HepG2 (cell line): ENCODE measurements at regions of chr9 and their contacts with region 1.

Region 1: GRCh38 chr9:130712564-130713285 is 19.1 kb downstream of the EXOSC2 start:
- DNase-seq: peak; percentile 95
- ATAC-seq: peak; percentile 98
- H3K4me3 ChIP-seq: peak overlapping the region; percentile 91 to 95 (median 92)
- H3K27ac ChIP-seq: peak overlapping the region; percentile 96
- H3K4me1 ChIP-seq: peaks cover 26% of the 10 kb centered on the region
- H3K27me3 ChIP-seq: no peaks in the 10 kb centered on the region; a peak in 1 of 5 replicates
- CTCF ChIP-seq: no peak
- EP300 ChIP-seq: no peak
- POLR2A ChIP-seq: peak in 1 of 2 experiments; percentile 89
- RAD21 ChIP-seq: 0 out of 2 replicates have a peak, but pooled peaks have one; percentile 7

Region 2: DNA sequence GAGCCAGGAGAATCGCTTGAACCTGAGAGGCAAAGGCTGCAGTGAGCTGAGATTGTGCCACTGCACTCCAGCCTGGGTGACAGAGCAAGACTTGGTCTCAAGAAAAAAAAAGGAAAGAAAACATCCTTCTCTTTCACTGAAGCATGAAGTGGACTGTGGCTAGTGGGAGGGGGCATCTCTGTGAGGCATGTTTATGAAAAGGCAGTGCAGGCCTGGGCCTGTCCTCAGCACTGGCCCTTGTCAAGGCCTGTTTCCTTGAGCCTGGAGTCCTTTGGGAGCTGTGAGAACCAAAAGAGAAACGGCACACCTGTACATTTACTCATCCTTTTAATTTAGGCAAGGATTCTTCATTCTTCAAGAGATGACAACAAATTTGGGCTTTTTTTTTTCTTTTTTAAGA is 151.7 kb before region 1 on chr9:
- CTCF ChIA-PET with region 1: no interaction called
- POLR2A ChIA-PET with region 1: no interaction called
- in situ Hi-C with region 1: no loop called
- intact Hi-C with region 1: no loop called
- DNase-seq: no peak
- ATAC-seq: no peak
- H3K4me3 ChIP-seq: no peak overlapping the region
- H3K27ac ChIP-seq: no peak overlapping the region
- H3K4me1 ChIP-seq: peaks cover 11% of the 10 kb centered on the region
- H3K27me3 ChIP-seq: 0 out of 5 replicates have a peak, but pooled peaks cover 0 to 4% of the 10 kb centered on the region in 2 experiments
- CTCF ChIP-seq: no peak
- EP300 ChIP-seq: no peak
- POLR2A ChIP-seq: no peak
- RAD21 ChIP-seq: no peak

Region 3: DNA sequence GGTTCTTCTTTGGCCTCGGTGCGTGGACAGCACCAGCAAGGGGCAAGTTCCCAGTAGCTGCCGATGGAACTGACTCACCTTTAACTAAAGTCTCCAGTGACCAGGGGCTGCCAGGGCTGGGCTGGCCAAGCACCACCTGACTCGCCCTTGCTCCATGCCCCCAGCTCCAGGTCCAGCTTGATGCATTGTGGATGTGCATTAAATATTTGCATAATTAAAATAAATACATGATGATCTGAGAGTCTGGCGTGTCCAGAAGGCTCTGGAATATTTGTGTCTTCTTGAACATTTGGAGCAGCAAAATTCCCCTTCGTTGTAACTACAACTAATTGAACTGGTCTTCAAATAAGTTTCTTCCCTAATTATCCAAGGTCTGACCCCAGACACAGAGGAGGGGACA is 57.8 kb before region 1 on chr9:
- CTCF ChIA-PET with region 1: no interaction called
- POLR2A ChIA-PET with region 1: no interaction called
- in situ Hi-C with region 1: no loop called
- intact Hi-C with region 1: no loop called
- DNase-seq: no peak
- ATAC-seq: no peak
- H3K4me3 ChIP-seq: no peak overlapping the region
- H3K27ac ChIP-seq: no peak overlapping the region
- H3K4me1 ChIP-seq: peaks cover 7% of the 10 kb centered on the region; the same call in 1 of the 2 replicates
- H3K27me3 ChIP-seq: peaks cover 3 to 60% of the 10 kb centered on the region in 2 experiments
- CTCF ChIP-seq: no peak
- EP300 ChIP-seq: no peak
- POLR2A ChIP-seq: no peak
- RAD21 ChIP-seq: no peak

Region 4: DNA sequence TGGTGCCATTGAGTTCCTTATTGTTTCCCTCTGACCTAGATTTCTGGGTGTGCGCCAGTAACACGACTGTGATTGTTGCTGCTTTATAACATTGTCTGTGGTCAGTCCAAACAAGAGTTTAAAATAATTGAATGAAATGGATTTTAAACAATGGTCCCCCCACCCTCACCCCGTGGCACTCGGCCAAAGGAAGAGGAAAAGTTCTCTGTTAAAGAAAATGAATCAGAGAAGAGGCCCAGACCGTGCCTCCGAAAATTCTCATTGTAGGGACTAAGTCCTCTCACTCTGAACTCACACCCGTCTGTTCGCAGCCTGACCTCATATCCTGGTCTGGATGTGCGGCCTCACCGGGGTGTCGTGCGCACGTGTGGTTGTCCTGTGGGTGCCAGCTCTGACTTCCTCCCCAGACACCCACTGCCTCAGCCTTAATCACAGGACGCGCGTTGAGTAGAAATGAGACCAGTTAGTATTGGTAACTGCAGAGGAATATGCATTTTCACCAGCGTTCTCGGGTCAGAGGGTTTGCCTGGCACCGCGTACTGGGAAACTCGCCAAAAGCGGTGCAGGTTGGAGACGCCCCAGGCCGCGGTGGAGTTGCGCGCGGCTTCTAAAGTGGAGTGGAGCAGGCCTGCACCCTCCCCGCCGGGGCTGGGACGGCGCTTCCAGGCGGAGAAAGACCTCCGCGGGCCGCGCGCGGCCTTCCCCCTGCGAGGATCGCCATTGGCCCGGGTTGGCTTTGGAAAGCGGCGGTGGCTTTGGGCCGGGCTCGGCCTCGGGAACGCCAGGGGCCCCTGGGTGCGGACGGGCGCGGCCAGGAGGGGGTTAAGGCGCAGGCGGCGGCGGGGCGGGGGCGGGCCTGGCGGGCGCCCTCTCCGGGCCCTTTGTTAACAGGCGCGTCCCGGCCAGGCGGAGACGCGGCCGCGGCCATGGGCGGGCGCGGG is 121.9 kb after region 1 on chr9 and contains the start of gene ABL1:
- CTCF ChIA-PET with region 1: no interaction called
- POLR2A ChIA-PET with region 1: no interaction called
- in situ Hi-C with region 1: no loop called
- intact Hi-C with region 1: loop called (anchors 10 kb)
- DNase-seq: peak; percentile 67
- ATAC-seq: peak; percentile 88
- H3K4me3 ChIP-seq: peak within 1 kb of the TSS; percentile 66 to 92 (median 81)
- H3K27ac ChIP-seq: peak within 1 kb of the TSS; percentile 88
- H3K4me1 ChIP-seq: peaks cover 38% of the 10 kb centered on the region
- H3K27me3 ChIP-seq: no peaks in the 10 kb centered on the region
- CTCF ChIP-seq: no peak
- EP300 ChIP-seq: no peak
- POLR2A ChIP-seq: peak; percentile 30 to 64; a peak in 3 of 4 replicates
- RAD21 ChIP-seq: no peak
- total RNA-seq, gene ABL1: 19.3 and 20.4 TPM in 2 replicates